ENCODE measurements at regions of chrX and their contacts with region 1.

Region 1: DNA sequence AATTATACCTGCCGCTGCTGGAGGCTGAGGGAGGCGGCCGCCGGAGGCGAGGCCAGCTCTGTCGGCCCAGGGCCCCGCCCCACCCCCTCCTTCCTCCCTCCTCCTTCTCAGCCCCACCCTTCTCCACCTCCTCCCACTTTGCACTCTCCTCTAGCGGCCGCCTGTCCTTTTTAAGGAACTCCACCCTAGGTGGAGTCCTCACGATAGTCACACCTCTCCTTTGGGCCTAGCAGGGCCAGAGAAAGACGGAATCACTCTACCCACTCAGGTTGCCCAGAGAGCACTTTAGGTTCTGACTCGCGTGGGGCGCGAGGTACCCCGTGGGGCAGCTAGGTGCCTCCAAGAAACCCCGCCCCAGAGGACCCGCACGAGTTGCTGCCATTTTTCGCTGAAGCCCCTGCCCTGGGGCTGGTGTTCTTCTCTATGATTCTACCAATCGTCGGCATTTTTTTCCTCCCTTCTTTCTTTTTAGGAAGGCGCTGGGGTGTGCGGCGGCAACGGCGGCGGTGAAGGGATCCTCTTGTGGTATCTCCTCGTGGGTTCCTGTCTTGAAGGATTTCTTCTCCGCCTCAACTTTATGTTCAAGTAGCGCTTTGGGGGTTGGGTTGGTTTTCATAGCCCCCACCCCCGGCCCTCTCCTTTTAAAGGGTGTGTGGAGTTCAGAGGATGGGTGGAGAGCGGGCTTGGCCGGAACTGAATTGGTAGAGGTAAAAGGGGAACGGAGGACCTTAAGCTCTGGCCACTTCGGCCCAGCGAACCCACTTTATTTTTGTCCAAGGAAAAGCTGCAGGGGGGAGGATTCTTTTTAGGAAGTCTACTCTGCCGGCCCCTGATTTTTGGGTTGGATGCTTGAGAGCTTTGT is at the start of gene KLF8:
- DNase-seq: peak; percentile 62 to 84
- H3K4me3 ChIP-seq: peak within 1 kb of the TSS; percentile 83
- H3K27ac ChIP-seq: peak within 1 kb of the TSS; percentile 53; the same call in 1 of the 2 replicates
- H3K4me1 ChIP-seq: peaks cover 37% of the 10 kb centered on the region
- H3K27me3 ChIP-seq: no peaks in the 10 kb centered on the region
- CTCF ChIP-seq: no peak
- total RNA-seq, gene KLF8: 92.7 and 93.2 TPM in 2 replicates

Region 2: GRCh38 chrX:55717521-55718497 is 514.6 kb before region 1 on chrX and contains the start of gene RRAGB:
- CTCF ChIA-PET with region 1: no interaction called
- POLR2A ChIA-PET with region 1: no interaction called
- intact Hi-C with region 1: loop called (anchors 5 kb)
- DNase-seq: peak; percentile 89 to 96
- H3K4me3 ChIP-seq: peak within 1 kb of the TSS; percentile 91
- H3K27ac ChIP-seq: peak within 1 kb of the TSS; percentile 86
- H3K4me1 ChIP-seq: peaks cover 11% of the 10 kb centered on the region; the same call in 1 of the 2 replicates
- H3K27me3 ChIP-seq: no peaks in the 10 kb centered on the region
- CTCF ChIP-seq: peak; percentile 69
- total RNA-seq, gene RRAGB: 18.6 and 23.3 TPM in 2 replicates

Region 3: DNA sequence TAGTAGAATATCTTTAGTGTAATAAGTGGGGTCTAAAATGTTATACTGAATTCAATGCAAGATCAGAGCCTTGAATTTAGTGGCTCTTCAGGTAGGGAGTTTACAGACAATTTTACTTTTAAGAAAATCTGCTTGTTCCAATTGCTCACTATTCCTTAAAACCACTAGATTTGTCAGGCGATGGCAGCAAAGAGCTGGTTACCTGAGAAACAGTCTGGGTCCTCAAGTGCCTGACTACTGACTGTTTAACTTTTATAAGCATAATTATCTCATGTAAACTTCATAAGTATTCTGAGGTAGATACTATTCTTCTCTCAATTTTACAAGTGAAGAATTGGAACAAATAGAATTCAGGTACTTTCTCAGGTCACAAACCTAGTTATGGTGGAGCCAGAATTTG is 430.6 kb before region 1 on chrX:
- CTCF ChIA-PET with region 1: no interaction called
- POLR2A ChIA-PET with region 1: no interaction called
- intact Hi-C with region 1: loop called (anchors 5 kb)
- DNase-seq: no peak
- H3K4me3 ChIP-seq: no peak overlapping the region
- H3K27ac ChIP-seq: no peak overlapping the region
- H3K4me1 ChIP-seq: 0 out of 2 replicates have a peak, but pooled peaks cover under 1% of the 10 kb centered on the region
- H3K27me3 ChIP-seq: no peaks in the 10 kb centered on the region
- CTCF ChIP-seq: no peak; the same call in 1 of the 2 replicates

Region 4: DNA sequence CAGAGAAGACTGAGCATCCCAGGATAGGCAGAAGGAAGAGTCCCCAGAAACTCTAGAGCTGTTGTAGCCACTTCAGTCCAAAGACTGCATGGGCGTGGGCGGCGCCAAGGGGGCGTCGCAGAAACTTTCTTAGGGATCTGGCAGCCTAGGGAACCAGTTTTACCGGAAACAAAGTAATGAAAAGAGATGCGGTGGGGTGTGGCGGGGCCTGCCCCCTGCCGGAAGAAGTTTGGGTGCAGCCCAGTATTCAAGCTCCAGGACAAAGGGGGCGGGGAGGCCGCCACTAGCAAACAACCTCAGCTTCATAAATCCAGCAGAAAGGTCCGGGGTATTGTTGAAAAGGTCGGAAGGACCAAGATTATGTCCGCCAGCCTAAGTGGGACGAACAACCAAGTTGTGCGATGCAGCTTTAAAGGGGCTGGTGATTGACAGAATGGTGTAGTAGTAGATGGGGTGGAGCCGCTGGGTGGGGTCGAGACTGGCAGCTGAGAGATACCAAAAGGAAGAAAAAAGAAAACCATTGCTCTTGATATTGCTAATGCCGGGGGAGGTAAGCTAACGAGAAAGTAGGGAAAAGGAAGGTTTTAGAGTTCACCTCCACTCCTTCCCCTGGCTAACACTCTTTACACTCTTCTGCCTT is 324.4 kb before region 1 on chrX:
- CTCF ChIA-PET with region 1: interaction called, 4 read pairs
- POLR2A ChIA-PET with region 1: no interaction called
- intact Hi-C with region 1: loop called (anchors 1 kb)
- DNase-seq: peak; percentile 72 to 78
- H3K4me3 ChIP-seq: peak overlapping the region; percentile 84
- H3K27ac ChIP-seq: peak overlapping the region; percentile 69
- H3K4me1 ChIP-seq: peaks cover 14% of the 10 kb centered on the region
- H3K27me3 ChIP-seq: no peaks in the 10 kb centered on the region
- CTCF ChIP-seq: peak; percentile 69

Region 5: GRCh38 chrX:56025872-56026571 is 206.4 kb before region 1 on chrX:
- CTCF ChIA-PET with region 1: interaction called, 5 read pairs
- POLR2A ChIA-PET with region 1: interaction called, 4 read pairs
- intact Hi-C with region 1: loop called (anchors 1 kb)
- DNase-seq: peak in 1 of 2 experiments; percentile 54
- H3K4me3 ChIP-seq: no peak overlapping the region
- H3K27ac ChIP-seq: no peak overlapping the region
- H3K4me1 ChIP-seq: peaks cover 29% of the 10 kb centered on the region
- H3K27me3 ChIP-seq: no peaks in the 10 kb centered on the region
- CTCF ChIP-seq: no peak

Region 6: GRCh38 chrX:56057325-56057724 is 175.1 kb before region 1 on chrX:
- CTCF ChIA-PET with region 1: no interaction called
- POLR2A ChIA-PET with region 1: no interaction called
- intact Hi-C with region 1: no loop called
- DNase-seq: no peak
- H3K4me3 ChIP-seq: no peak overlapping the region
- H3K27ac ChIP-seq: no peak overlapping the region
- H3K4me1 ChIP-seq: peaks cover 7% of the 10 kb centered on the region; the same call in 1 of the 2 replicates
- H3K27me3 ChIP-seq: no peaks in the 10 kb centered on the region
- CTCF ChIP-seq: no peak

Region 7: GRCh38 chrX:56503941-56504662 is 271.6 kb after region 1 on chrX:
- CTCF ChIA-PET with region 1: interaction called, 4 read pairs
- POLR2A ChIA-PET with region 1: no interaction called
- intact Hi-C with region 1: loop called (anchors 5 kb)
- DNase-seq: peak; percentile 89 to 91
- H3K4me3 ChIP-seq: peak overlapping the region; percentile 46
- H3K27ac ChIP-seq: peak overlapping the region; percentile 100
- H3K4me1 ChIP-seq: peaks cover 57% of the 10 kb centered on the region
- H3K27me3 ChIP-seq: no peaks in the 10 kb centered on the region
- CTCF ChIP-seq: no peak; the same call in 1 of the 2 replicates

Region 8: DNA sequence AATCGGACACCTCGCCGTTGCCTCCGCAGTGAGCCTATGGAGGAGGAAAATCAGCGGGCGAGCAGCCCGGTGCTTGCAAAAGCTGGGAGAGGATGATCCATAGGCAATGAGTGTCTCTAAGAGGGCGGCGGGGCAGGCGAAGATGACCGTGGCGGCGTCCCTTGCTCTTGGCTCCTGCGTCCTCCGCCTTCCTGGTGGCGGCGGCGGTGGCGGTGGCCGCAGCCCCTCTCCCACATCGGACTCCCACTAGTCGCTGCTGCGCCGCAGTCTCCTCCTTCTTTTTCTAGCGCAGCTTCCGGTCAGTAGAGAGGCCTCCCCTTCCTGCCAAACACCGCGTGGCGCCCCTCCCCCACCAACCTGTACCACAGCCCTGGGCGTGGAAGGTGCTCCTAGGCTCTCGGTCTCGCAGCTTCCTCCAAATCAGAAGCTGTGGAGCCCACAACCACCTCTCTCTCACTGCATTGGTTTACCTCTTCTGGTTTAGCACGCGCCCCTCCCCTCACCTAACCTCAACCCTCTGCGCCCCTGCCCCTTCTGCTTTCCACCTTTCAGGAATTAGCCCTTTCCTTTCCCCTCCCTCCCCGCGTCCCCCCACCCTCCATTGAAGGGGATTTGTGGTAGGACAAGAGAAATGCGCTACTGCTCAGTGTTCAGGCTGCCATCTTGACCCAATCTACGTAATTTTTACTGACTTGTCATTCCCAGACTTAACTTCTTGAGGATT is 763.0 kb after region 1 on chrX and contains the start of gene SPIN3:
- CTCF ChIA-PET with region 1: no interaction called
- POLR2A ChIA-PET with region 1: interaction called, 11 read pairs
- intact Hi-C with region 1: no loop called
- DNase-seq: peak; percentile 74 to 97
- H3K4me3 ChIP-seq: peak within 1 kb of the TSS; percentile 82
- H3K27ac ChIP-seq: peak within 1 kb of the TSS; percentile 70
- H3K4me1 ChIP-seq: no peaks in the 10 kb centered on the region; the same call in 1 of the 2 replicates
- H3K27me3 ChIP-seq: no peaks in the 10 kb centered on the region
- CTCF ChIP-seq: no peak
- total RNA-seq, gene SPIN3: 29.8 and 39.6 TPM in 2 replicates